Naive thymus-derived CD4-positive, alpha-beta T cell (primary cell): ENCODE measurements at regions of chr7 and their contacts with region 1.

Region 1: GRCh38 chr7:128209229-128210035 is 31.6 kb upstream of the LEP start:
- DNase-seq: peak; percentile 44 to 73 (median 64)
- ATAC-seq: peak; percentile 94
- H3K4me3 ChIP-seq: no peak overlapping the region
- H3K4me3 Mint-ChIP-seq: no peak overlapping the region
- H3K27ac ChIP-seq: no peak overlapping the region
- H3K27ac Mint-ChIP-seq: no peak overlapping the region
- H3K4me1 ChIP-seq: no peaks in the 10 kb centered on the region
- H3K4me1 Mint-ChIP-seq: peaks cover 0 to 2% (median 0%) of the 10 kb centered on the region in 7 donors
- H3K27me3 ChIP-seq: no peaks in the 10 kb centered on the region
- H3K27me3 Mint-ChIP-seq: peaks cover 0 to 24% (median 19%) of the 10 kb centered on the region in 5 donors

Region 2: DNA sequence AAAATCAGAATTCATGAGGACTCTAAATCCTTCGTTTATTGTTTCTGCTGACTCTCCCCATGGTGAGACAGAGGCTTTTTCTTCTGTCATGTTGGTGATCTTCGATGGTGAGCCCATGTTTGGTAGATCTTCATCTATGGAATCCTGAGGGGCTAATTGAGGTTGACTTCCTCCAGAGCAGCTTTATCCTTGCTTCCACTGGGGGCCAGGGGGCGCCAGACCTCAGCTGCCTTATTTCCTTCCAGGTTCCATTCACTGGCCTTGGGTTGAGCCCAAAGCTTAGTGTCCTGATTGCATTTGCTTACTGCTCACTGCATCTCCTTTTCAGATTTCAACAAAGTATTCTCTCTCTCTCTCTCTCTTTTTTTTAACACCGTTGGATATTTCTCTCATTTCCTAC is 704.7 kb before region 1 on chr7:
- CTCF ChIA-PET with region 1: no interaction called
- POLR2A ChIA-PET with region 1: no interaction called
- intact Hi-C with region 1: loop called (anchors 2 to 10 kb)
- DNase-seq: peak in 2 of 9 donors; percentile 5 to 22
- ATAC-seq: no peak
- H3K4me3 ChIP-seq: no peak overlapping the region
- H3K4me3 Mint-ChIP-seq: no peak overlapping the region
- H3K27ac ChIP-seq: no peak overlapping the region
- H3K27ac Mint-ChIP-seq: peak overlapping the region in 1 of 9 donors; percentile 49
- H3K4me1 ChIP-seq: no peaks in the 10 kb centered on the region
- H3K4me1 Mint-ChIP-seq: peaks cover 0 to 7% (median 0%) of the 10 kb centered on the region in 7 donors
- H3K27me3 ChIP-seq: no peaks in the 10 kb centered on the region
- H3K27me3 Mint-ChIP-seq: peaks cover 12 to 37% (median 24%) of the 10 kb centered on the region in 5 donors

Region 3: GRCh38 chr7:127557803-127558202 is 651.6 kb before region 1 on chr7:
- CTCF ChIA-PET with region 1: interaction called, 3 read pairs
- POLR2A ChIA-PET with region 1: no interaction called
- intact Hi-C with region 1: loop called in 1 of 2 experiments (anchors 1 kb)
- DNase-seq: no peak
- ATAC-seq: no peak
- H3K4me3 ChIP-seq: no peak overlapping the region
- H3K4me3 Mint-ChIP-seq: no peak overlapping the region
- H3K27ac ChIP-seq: no peak overlapping the region
- H3K27ac Mint-ChIP-seq: no peak overlapping the region
- H3K4me1 ChIP-seq: no peaks in the 10 kb centered on the region
- H3K4me1 Mint-ChIP-seq: peaks cover 0 to 5% (median 0%) of the 10 kb centered on the region in 7 donors
- H3K27me3 ChIP-seq: no peaks in the 10 kb centered on the region
- H3K27me3 Mint-ChIP-seq: peaks cover 0 to 7% (median 0%) of the 10 kb centered on the region in 5 donors

Region 4: GRCh38 chr7:127708788-127709187 is 500.6 kb before region 1 on chr7:
- CTCF ChIA-PET with region 1: interaction called, 164 read pairs
- POLR2A ChIA-PET with region 1: interaction called, 3 read pairs
- intact Hi-C with region 1: loop called (anchors 1 kb)
- DNase-seq: peak; percentile 25 to 76 (median 65)
- ATAC-seq: peak; percentile 82
- H3K4me3 ChIP-seq: no peak overlapping the region
- H3K4me3 Mint-ChIP-seq: no peak overlapping the region
- H3K27ac ChIP-seq: no peak overlapping the region
- H3K27ac Mint-ChIP-seq: peak overlapping the region in 2 of 9 donors; percentile 18 to 26
- H3K4me1 ChIP-seq: no peaks in the 10 kb centered on the region
- H3K4me1 Mint-ChIP-seq: peaks cover 0 to 8% (median 0%) of the 10 kb centered on the region in 7 donors
- H3K27me3 ChIP-seq: no peaks in the 10 kb centered on the region
- H3K27me3 Mint-ChIP-seq: no peaks in the 10 kb centered on the region

Region 5: DNA sequence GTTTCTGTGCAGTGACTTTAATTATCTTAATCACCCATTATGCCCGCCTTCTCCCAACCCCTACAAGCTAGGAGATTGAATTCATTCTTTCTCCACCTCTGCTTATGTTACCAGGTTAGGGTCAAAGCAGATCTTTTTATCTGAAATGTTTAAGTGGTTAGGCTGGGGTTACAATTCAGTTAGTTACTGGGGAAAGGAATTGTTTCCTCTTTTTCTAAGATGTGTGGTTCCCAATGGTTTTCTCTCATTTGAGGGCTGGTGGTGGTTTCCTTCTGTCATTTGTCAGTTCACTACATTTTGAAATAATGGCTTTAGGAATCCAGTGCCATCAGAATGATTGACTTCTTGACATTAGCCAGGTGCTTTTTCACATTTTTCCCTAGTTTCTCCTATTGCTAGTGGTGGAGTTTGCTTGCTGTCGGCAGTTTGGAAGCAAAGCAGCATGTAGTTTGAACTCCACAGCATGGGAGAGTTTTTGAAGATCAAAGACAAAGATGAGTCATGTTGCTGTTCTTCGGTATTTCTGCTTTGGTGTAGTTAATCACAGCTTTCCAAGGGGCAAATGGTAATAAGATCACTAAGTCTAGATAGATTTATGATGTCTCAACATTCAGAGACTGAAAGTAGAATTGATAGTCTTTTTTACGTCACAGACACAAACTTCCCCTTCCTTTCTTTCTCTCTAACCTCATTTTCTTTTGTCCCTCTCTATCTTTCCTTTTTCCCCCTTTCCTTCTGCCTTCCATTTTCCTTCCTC is 389.3 kb before region 1 on chr7:
- CTCF ChIA-PET with region 1: no interaction called
- POLR2A ChIA-PET with region 1: no interaction called
- intact Hi-C with region 1: no loop called
- DNase-seq: no peak
- ATAC-seq: peak; percentile 36
- H3K4me3 ChIP-seq: no peak overlapping the region
- H3K4me3 Mint-ChIP-seq: peak overlapping the region in 1 of 10 donors; percentile 37
- H3K27ac ChIP-seq: no peak overlapping the region
- H3K27ac Mint-ChIP-seq: peak overlapping the region in 1 of 9 donors; percentile 29
- H3K4me1 ChIP-seq: peaks cover 0 to 4% of the 10 kb centered on the region in 2 donors
- H3K4me1 Mint-ChIP-seq: peaks cover 30 to 52% (median 48%) of the 10 kb centered on the region in 7 donors
- H3K27me3 ChIP-seq: no peaks in the 10 kb centered on the region
- H3K27me3 Mint-ChIP-seq: no peaks in the 10 kb centered on the region

Region 6: DNA sequence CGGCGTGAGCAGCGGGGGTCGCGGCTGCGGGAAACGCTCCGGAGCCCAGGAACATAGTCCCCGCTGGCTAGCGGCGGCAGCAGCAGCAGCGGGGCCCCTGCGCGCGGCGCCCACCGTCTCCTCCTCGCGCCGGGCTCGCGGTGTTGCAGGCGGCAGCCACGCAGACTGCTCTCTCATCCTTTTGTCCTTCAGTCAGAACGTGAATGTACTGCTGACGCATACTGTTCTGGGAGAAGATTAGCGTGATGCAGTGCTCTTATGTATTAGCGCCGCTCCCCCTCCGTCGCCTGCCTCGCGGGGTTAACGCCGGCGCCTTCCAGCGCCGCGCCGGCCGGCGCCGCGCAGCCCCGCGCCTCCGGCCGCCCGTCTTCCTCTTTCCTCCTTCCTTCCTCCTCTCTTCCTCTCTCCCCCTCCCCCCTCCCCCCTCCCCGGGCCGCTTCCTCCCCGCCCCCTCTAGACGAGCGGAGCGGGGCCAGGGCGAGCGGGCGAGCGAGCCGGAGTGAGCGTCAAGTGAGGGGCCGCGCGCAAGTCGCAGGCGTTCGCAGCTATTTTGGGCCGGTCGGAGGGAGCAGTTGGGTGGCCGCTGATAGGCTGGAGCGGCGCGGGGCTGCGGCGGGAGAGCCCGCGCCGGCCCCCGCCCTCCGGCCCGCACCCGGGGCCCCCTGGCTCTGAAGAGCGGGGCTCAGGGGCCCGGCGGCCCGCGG is 177.4 kb before region 1 on chr7:
- CTCF ChIA-PET with region 1: interaction called, 3 read pairs
- POLR2A ChIA-PET with region 1: no interaction called
- intact Hi-C with region 1: loop called (anchors 1 to 10 kb)
- DNase-seq: peak; percentile 29 to 63 (median 53)
- ATAC-seq: peak; percentile 92
- H3K4me3 ChIP-seq: peak overlapping the region; percentile 61
- H3K4me3 Mint-ChIP-seq: peak overlapping the region; percentile 84 to 97 (median 92)
- H3K27ac ChIP-seq: no peak overlapping the region
- H3K27ac Mint-ChIP-seq: peak overlapping the region in 3 of 9 donors; percentile 74 to 76 (median 74)
- H3K4me1 ChIP-seq: no peaks in the 10 kb centered on the region
- H3K4me1 Mint-ChIP-seq: peaks cover 6 to 36% (median 23%) of the 10 kb centered on the region in 7 donors
- H3K27me3 ChIP-seq: no peaks in the 10 kb centered on the region
- H3K27me3 Mint-ChIP-seq: peaks cover 0 to 34% (median 7%) of the 10 kb centered on the region in 5 donors